Endothelial cell of umbilical vein (primary cell): ENCODE measurements at regions of chr1 and their contacts with region 1.

Region 1: DNA sequence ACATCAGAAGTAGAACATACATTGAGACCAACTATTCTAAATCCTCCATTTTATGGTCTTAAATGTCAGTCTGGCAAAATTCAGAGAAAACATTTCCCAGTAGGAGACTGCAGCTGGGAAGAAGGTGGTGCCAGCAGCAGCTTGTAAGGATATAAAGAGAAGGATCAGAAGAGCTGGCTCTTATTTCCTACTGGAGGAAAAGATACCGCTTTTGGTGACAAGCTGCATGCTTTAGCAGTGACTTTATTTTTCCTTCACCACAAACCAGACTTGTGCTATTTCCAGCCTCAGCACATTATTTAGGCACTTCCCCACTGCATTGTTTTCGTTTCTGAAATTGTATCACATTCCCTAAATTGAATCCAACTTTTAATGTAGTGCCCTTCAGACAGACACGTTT is 28.4 kb downstream of the RNF11 start:
- DNase-seq: peak; percentile 84
- H3K4me3 ChIP-seq: no peak overlapping the region
- H3K27ac ChIP-seq: peak overlapping the region; percentile 61
- H3K4me1 ChIP-seq: peaks cover 53% of the 10 kb centered on the region
- H3K27me3 ChIP-seq: no peaks in the 10 kb centered on the region
- CTCF ChIP-seq: no peak
- POLR2A ChIP-seq: no peak

Region 2: GRCh38 chr1:51235673-51236530 is 28.5 kb before region 1 on chr1 and contains the start of gene RNF11:
- CTCF ChIA-PET with region 1: no interaction called
- POLR2A ChIA-PET with region 1: no interaction called
- dilution Hi-C with region 1: no loop called
- intact Hi-C with region 1: loop called (anchors 1 kb)
- DNase-seq: peak; percentile 91
- H3K4me3 ChIP-seq: peak within 1 kb of the TSS; percentile 88 to 98 (median 91)
- H3K27ac ChIP-seq: peak within 1 kb of the TSS; percentile 97
- H3K4me1 ChIP-seq: peaks cover 23% of the 10 kb centered on the region
- H3K27me3 ChIP-seq: no peaks in the 10 kb centered on the region
- CTCF ChIP-seq: peak in 1 of 2 donors; percentile 0
- POLR2A ChIP-seq: peak; percentile 95
- total RNA-seq, gene RNF11: 82.9 and 94.4 TPM in 2 replicates

Region 3: GRCh38 chr1:51253691-51254090 is 10.8 kb before region 1 on chr1:
- CTCF ChIA-PET with region 1: interaction called, 5 read pairs
- POLR2A ChIA-PET with region 1: interaction called, 5 read pairs
- dilution Hi-C with region 1: no loop called
- intact Hi-C with region 1: loop called (anchors 1 kb)
- DNase-seq: no peak
- H3K4me3 ChIP-seq: no peak overlapping the region
- H3K27ac ChIP-seq: no peak overlapping the region
- H3K4me1 ChIP-seq: no peaks in the 10 kb centered on the region
- H3K27me3 ChIP-seq: no peaks in the 10 kb centered on the region
- CTCF ChIP-seq: no peak
- POLR2A ChIP-seq: no peak